MCF 10A (cell line): ENCODE measurements at regions of chr19 and their contacts with region 1.

Region 1: GRCh38 chr19:49224856-49225255 is 67.3 kb downstream of the TRPM4 start:
- DNase-seq: peak; percentile 77
- H3K4me3 Mint-ChIP-seq: no peak overlapping the region
- H3K27ac Mint-ChIP-seq: no peak overlapping the region
- H3K4me1 Mint-ChIP-seq: no peaks in the 10 kb centered on the region
- H3K27me3 Mint-ChIP-seq: no peaks in the 10 kb centered on the region
- CTCF ChIP-seq: peak; percentile 59

Region 2: DNA sequence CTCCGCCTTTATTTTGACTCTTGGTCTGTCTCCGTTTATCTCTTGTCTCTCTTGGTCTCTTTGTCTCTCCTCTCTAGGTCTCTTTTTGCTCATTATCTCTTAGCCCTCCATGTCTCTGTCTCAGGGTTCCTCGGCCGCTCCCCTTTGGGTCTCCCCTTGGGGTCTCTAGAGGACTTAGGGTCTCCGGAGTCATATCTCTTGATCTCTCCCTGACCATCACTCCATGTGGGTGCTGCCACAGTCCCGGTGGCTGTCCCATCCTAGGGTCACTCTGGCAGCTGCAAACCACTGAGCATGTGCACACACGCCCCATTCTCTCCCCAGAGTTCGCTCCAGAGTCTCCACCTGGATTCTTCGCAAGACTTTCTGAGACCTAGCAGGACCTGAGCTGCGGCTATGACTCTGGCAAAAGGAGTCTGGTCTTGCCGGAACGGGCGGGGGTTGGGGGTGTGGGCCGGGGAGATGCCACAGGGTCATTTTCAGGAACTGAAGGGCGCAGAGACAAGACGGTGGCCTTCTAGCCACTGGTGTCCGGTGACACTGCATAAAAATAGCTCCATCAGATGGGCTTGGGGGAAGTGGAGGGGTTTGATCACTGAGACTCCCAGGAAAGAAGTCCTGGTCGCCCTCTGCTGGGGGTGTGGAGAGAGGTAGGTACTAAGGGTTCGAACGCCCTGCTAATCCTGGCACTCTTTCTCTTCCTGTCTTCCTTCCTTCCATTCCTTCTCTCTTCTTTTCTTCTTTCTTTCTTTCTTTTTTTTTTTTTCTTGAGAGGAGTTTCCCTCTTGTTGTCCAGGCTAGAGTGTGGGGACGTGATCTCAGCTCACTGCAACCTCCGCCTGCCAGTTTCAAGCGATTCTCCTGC is 151.1 kb before region 1 on chr19:
- CTCF ChIA-PET with region 1: interaction called, 5 read pairs
- POLR2A ChIA-PET with region 1: no interaction called
- intact Hi-C with region 1: loop called (anchors 1 kb)
- DNase-seq: peak; percentile 56
- H3K4me3 Mint-ChIP-seq: no peak overlapping the region
- H3K27ac Mint-ChIP-seq: no peak overlapping the region
- H3K4me1 Mint-ChIP-seq: peaks cover 19% of the 10 kb centered on the region
- H3K27me3 Mint-ChIP-seq: peaks cover 20% of the 10 kb centered on the region
- CTCF ChIP-seq: peak; percentile 47

Region 3: DNA sequence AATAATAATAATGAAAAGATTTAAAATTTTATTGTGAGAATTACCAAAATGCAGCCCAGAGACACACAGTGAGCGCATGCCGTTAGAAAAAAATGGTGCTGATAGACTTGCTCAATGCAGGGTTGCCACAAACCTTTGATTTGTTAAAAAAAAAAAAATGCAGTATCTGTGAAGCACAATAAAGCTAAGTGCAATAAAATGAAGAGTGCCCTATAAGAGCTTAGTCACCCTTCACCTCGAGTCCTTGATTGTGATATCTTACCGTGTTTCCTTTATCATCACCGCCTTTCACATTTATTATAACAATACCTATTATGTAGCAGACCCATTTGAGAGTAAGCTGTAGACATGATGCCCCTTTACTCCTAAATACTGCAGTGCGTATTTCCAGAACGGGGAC is 16.9 kb after region 1 on chr19:
- CTCF ChIA-PET with region 1: interaction called, 39 read pairs
- POLR2A ChIA-PET with region 1: no interaction called
- intact Hi-C with region 1: no loop called
- DNase-seq: no peak
- H3K4me3 Mint-ChIP-seq: no peak overlapping the region
- H3K27ac Mint-ChIP-seq: no peak overlapping the region
- H3K4me1 Mint-ChIP-seq: no peaks in the 10 kb centered on the region
- H3K27me3 Mint-ChIP-seq: peaks cover 12% of the 10 kb centered on the region
- CTCF ChIP-seq: no peak

Region 4: DNA sequence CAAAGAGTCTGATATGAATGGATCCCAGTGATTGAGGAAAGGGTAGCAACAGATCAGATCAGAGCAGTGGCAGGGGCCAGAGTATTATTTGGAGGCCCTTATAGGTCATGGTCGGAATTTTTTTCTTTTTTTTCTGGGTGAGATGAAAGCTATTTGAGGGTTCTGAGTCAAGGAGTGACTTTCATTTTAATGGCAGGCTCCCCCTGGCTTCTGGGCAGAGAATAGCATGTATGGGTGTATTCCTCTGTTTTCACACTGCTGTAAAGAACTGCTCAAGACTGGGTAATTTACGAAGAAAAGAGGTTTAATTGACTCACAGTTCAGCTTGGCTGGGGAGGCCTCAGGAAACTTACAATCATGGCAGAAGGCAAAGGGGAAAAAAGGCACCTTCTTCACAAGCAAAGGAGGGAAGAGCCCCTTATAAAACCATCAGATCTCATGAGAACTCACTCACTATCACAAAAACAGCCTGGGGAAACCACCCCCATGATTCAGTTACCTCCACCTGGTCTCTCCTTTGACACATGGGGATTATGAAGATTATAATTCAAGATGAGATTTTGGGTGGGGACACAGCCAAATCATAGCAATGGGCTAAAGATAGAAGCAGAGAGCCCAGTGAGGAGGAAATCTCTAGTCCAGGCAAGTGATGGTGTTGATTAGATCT is 103.2 kb after region 1 on chr19:
- CTCF ChIA-PET with region 1: interaction called, 14 read pairs
- POLR2A ChIA-PET with region 1: interaction called, 4 read pairs
- intact Hi-C with region 1: loop called (anchors 1 kb)
- DNase-seq: peak; percentile 58
- H3K4me3 Mint-ChIP-seq: no peak overlapping the region
- H3K27ac Mint-ChIP-seq: no peak overlapping the region
- H3K4me1 Mint-ChIP-seq: peaks cover 6% of the 10 kb centered on the region
- H3K27me3 Mint-ChIP-seq: no peaks in the 10 kb centered on the region
- CTCF ChIP-seq: peak; percentile 48

Region 5: GRCh38 chr19:49443366-49444099 is 218.7 kb after region 1 on chr19:
- CTCF ChIA-PET with region 1: interaction called, 7 read pairs
- POLR2A ChIA-PET with region 1: no interaction called
- intact Hi-C with region 1: loop called (anchors 1 kb)
- DNase-seq: peak; percentile 96
- H3K4me3 Mint-ChIP-seq: peak overlapping the region; percentile 75
- H3K27ac Mint-ChIP-seq: peak overlapping the region; percentile 85
- H3K4me1 Mint-ChIP-seq: peaks cover 28% of the 10 kb centered on the region
- H3K27me3 Mint-ChIP-seq: peaks cover 45% of the 10 kb centered on the region
- CTCF ChIP-seq: peak; percentile 63